ENCODE measurements at regions of chr11 and their contacts with region 1.

Region 1: DNA sequence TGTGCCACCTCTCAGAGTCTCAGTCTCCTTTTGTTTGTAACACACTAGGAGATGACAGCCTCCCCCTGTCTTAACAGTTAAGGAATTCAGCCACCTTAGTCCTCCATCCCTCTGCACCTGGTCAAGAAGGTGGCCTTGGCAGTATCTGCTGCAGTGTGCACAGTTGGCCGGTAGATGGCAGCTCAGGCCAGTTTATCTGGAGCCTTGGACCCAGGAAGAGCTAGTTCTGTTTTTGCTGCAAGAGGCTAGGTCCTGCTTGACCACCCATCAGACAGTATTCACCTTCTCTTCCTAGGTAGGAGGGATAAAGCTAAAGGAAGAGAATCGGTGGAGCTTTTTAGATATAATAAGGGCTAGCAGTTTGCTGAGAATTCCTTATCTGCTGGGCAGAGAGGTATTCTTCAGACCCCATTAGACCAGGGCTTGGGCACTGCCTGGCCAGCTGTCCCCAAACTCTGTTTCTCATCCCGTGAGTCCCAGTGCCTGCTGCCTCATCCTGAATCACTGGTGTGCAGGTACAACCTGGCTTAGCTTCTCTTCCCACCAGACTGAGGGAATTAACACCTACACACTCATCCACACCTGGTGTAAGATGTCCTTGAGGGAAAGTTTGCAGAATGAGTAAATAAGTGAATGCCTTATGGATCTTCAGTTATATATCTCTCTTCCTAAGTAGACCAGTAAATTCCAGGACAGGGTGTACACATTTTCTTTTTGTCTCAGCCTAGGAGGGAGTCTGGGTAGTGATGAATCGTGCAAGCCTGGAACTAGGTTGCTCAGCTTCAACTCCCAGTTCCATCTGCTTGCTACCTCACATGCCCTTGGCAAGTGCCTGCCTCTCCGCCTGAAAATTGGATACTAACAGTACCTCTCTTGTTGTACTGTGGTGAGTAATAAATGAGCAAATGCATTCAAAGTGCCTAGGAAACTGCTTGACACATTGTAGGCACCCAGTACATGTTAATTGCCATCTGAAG is 70.8 kb upstream of the NARS2 start:
- DNase-seq: peak; percentile 50
- ATAC-seq: peak; percentile 84
- H3K4me3 ChIP-seq: no peak overlapping the region
- H3K27ac ChIP-seq: no peak overlapping the region
- H3K4me1 ChIP-seq: no peaks in the 10 kb centered on the region
- H3K27me3 ChIP-seq: peaks cover 36% of the 10 kb centered on the region
- CTCF ChIP-seq: peak; percentile 65 to 96 (median 96)
- POLR2A ChIP-seq: no peak
- RAD21 ChIP-seq: peak; percentile 87

Region 2: GRCh38 chr11:78630561-78631303 is 14.8 kb before region 1 on chr11:
- CTCF ChIA-PET with region 1: no interaction called
- POLR2A ChIA-PET with region 1: no interaction called
- RAD21 ChIA-PET with region 1: no interaction called
- intact Hi-C with region 1: no loop called
- DNase-seq: no peak
- ATAC-seq: no peak
- H3K4me3 ChIP-seq: no peak overlapping the region
- H3K27ac ChIP-seq: no peak overlapping the region
- H3K4me1 ChIP-seq: no peaks in the 10 kb centered on the region
- H3K27me3 ChIP-seq: no peaks in the 10 kb centered on the region
- CTCF ChIP-seq: peak; percentile 4 to 42 (median 35); a peak in 4 of 6 replicates
- POLR2A ChIP-seq: no peak
- RAD21 ChIP-seq: peak; percentile 31

Region 3: DNA sequence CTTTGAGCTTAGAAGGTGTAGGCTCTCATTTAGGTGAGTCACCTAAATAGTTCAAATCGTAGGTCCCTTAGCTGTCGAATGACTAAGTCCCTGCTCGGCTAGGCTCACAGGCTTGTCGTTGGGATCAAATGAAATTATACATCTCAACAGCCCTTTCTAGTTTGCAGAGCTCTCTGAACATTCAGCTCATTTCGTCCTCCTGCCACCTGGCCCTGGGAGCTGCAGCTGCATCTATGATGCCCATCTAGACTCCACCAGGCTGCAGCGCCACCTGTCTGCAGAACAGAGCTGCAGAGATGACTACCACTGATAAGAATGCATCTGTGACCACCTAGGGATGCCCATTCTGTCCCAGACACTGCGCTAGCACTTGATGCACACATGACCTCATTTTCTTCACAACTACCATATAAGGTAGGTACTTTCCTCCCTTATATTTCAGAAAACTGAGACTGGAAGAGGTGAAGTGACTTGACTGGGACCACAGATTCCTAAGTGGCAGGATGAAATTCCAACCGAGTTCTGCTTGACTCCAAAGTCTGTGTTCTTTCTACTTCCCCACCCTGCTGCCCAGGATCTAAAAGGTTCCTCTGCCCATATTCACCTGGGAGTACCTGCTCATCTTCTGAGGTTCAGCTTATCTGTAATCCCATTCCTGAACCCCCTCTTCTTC is 70.3 kb after region 1 on chr11:
- CTCF ChIA-PET with region 1: interaction called, 158 read pairs
- POLR2A ChIA-PET with region 1: interaction called, 4 read pairs
- RAD21 ChIA-PET with region 1: interaction called, 9 to 24 read pairs
- intact Hi-C with region 1: loop called (anchors 1 kb)
- DNase-seq: peak; percentile 73
- ATAC-seq: peak; percentile 95
- H3K4me3 ChIP-seq: no peak overlapping the region
- H3K27ac ChIP-seq: no peak overlapping the region
- H3K4me1 ChIP-seq: peaks cover 10 to 18% of the 10 kb centered on the region in 2 experiments
- H3K27me3 ChIP-seq: peaks cover 11% of the 10 kb centered on the region; the same call in 1 of the 2 replicates
- CTCF ChIP-seq: peak; percentile 82 to 94 (median 93)
- POLR2A ChIP-seq: no peak
- RAD21 ChIP-seq: peak; percentile 77

Region 4: GRCh38 chr11:78961247-78961646 is 315.7 kb after region 1 on chr11:
- CTCF ChIA-PET with region 1: interaction called, 54 read pairs
- POLR2A ChIA-PET with region 1: no interaction called
- RAD21 ChIA-PET with region 1: interaction called in 1 of 2 experiments, 5 read pairs
- intact Hi-C with region 1: loop called (anchors 1 kb)
- DNase-seq: peak; percentile 15
- ATAC-seq: peak; percentile 84
- H3K4me3 ChIP-seq: no peak overlapping the region
- H3K27ac ChIP-seq: no peak overlapping the region
- H3K4me1 ChIP-seq: no peaks in the 10 kb centered on the region
- H3K27me3 ChIP-seq: peaks cover 4% of the 10 kb centered on the region
- CTCF ChIP-seq: peak; percentile 40 to 47 (median 45); a peak in 5 of 6 replicates
- POLR2A ChIP-seq: no peak
- RAD21 ChIP-seq: peak; percentile 55

Region 5: GRCh38 chr11:79076526-79077115 is 431.1 kb after region 1 on chr11:
- CTCF ChIA-PET with region 1: interaction called, 25 read pairs
- POLR2A ChIA-PET with region 1: no interaction called
- RAD21 ChIA-PET with region 1: interaction called in 1 of 2 experiments, 3 read pairs
- intact Hi-C with region 1: loop called (anchors 1 kb)
- DNase-seq: peak; percentile 32
- ATAC-seq: peak; percentile 88
- H3K4me3 ChIP-seq: no peak overlapping the region
- H3K27ac ChIP-seq: no peak overlapping the region
- H3K4me1 ChIP-seq: no peaks in the 10 kb centered on the region
- H3K27me3 ChIP-seq: no peaks in the 10 kb centered on the region
- CTCF ChIP-seq: peak; percentile 49 to 81 (median 70); a peak in 5 of 6 replicates
- POLR2A ChIP-seq: no peak
- RAD21 ChIP-seq: peak; percentile 52

Region 6: GRCh38 chr11:79160791-79161403 is 515.4 kb after region 1 on chr11:
- CTCF ChIA-PET with region 1: interaction called, 3 read pairs
- POLR2A ChIA-PET with region 1: no interaction called
- RAD21 ChIA-PET with region 1: no interaction called
- intact Hi-C with region 1: loop called (anchors 2 kb)
- DNase-seq: no peak
- ATAC-seq: peak; percentile 42; the same call in 1 of the 2 replicates
- H3K4me3 ChIP-seq: no peak overlapping the region
- H3K27ac ChIP-seq: no peak overlapping the region
- H3K4me1 ChIP-seq: no peaks in the 10 kb centered on the region
- H3K27me3 ChIP-seq: peaks cover 4% of the 10 kb centered on the region; the same call in 1 of the 2 replicates
- CTCF ChIP-seq: peak in 2 of 3 experiments; percentile 23 to 26; a peak in 1 of 6 replicates
- POLR2A ChIP-seq: no peak
- RAD21 ChIP-seq: 0 out of 2 replicates have a peak, but pooled peaks have one; percentile 6

Measured in HCT116 (cell line).